ENCODE measurements at regions of chr10 and their contacts with region 1.

Region 1: DNA sequence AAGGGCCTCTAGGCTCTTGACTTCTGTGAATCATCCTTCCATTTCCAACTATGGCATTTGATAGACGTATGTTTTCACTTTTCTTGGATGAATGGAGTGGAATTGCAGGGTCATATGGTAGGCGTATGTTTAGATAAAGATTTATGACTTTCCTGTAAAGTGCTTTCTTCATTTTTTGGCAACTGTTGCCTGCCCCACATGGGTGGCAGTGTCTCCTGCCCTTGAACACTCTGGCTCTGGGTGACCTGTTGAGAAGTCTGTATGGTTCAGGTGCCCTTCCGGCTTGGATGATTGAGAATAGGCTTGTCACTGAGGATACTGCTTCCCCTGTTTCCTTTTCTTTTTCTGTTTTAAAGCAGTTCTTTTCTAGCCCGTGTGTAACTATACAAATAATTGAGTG is 23.1 kb downstream of the RET start:
- DNase-seq: no peak
- H3K4me3 ChIP-seq: no peak overlapping the region
- H3K27ac ChIP-seq: no peak overlapping the region
- H3K4me1 ChIP-seq: peaks cover 4% of the 10 kb centered on the region
- H3K27me3 ChIP-seq: no peaks in the 10 kb centered on the region
- CTCF ChIP-seq: no peak

Region 2: DNA sequence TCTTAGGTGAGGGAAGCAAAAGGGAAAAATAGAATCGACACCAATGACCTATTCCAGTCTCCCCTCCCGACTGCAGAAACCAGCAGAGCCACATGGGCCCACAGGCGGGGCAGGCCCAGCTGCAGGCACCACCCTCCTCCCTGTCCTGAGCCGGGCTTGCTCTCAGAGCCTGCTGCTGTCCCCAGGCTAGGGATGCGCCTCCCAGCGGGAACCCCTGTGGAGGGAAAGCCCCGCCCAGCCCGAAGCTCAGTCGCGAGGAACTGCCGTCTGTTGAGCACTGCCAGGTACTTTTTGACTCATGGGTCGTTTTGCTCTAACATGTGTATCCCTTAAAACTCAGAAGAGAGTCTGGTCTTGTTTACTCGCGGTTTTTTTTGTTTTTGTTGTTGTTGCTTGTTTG is 147.6 kb before region 1 on chr10:
- CTCF ChIA-PET with region 1: no interaction called
- dilution Hi-C with region 1: loop called (anchors 5 kb)
- in situ Hi-C with region 1: no loop called
- intact Hi-C with region 1: no loop called
- DNase-seq: peak; percentile 4
- H3K4me3 ChIP-seq: no peak overlapping the region
- H3K27ac ChIP-seq: no peak overlapping the region
- H3K4me1 ChIP-seq: peaks cover 5% of the 10 kb centered on the region
- H3K27me3 ChIP-seq: no peaks in the 10 kb centered on the region
- CTCF ChIP-seq: no peak

Region 3: DNA sequence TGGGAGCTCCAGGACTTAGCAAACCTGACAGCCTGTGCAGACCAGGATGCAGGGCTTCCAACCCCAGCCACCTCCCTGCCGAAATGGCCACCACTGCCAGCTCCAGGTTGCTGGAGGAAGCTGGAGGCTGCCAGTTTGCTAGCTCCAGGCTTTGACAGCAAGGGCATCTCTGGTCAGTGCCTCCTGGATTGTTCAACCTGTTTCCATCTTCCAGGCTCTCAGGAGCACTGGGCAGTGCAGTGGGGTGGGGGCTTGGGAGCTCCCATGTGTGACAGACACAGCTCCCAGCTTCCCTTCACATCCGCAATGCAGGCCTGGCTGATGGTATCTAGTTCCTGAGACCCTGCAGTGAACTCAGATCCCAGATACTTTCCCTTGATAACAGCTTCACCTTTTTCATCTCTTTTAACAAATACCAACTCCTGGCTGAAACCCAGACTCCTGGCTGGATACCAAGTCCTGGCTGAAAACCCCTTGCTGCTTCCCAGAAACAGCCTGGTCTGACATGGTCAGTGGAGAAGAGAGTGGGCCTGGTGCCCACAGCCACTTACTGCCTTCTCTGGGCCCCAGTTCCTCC is 43.8 kb before region 1 on chr10:
- CTCF ChIA-PET with region 1: no interaction called
- dilution Hi-C with region 1: loop called (anchors 5 kb)
- in situ Hi-C with region 1: no loop called
- intact Hi-C with region 1: no loop called
- DNase-seq: no peak
- H3K4me3 ChIP-seq: no peak overlapping the region
- H3K27ac ChIP-seq: no peak overlapping the region
- H3K4me1 ChIP-seq: peaks cover 4% of the 10 kb centered on the region
- H3K27me3 ChIP-seq: peaks cover 6% of the 10 kb centered on the region
- CTCF ChIP-seq: no peak

Region 4: DNA sequence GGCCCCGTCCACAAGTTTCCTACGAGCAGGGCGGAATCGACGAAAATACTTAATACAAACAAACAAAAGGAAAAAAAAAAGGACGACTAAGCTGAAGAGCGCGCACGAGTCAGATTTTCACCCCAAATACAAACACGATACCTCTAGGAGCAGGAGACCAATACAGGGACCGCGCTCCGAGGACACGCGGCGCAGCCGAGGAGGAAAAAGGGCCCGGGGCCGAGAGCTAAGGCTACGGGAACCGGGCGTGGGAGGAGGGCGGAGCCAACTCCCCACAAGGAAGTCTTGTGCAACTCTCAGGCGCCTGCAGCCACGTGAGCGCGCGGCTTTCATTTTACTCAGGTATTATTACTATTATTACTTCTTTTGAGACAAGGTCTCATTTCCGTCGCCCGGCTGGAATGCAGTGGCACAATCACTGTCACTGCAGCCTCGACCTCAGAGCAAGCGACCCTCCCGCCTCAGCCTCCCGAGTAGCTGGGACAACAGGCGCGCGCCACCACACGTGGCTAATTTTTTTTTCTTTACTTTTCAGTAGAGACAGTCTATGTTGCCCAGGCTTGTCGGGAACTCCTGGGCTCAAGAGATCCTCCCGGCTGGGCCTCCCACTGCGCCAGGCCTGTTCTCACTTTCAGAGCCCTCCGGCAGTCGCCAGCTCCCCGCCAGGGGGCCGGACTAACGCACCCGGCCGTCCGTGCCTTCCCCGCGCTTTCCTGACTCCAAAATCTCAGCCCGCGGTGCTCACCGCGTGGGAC is 307.8 kb after region 1 on chr10:
- CTCF ChIA-PET with region 1: no interaction called
- dilution Hi-C with region 1: no loop called
- in situ Hi-C with region 1: no loop called
- intact Hi-C with region 1: no loop called
- DNase-seq: peak; percentile 86
- H3K4me3 ChIP-seq: peak overlapping the region; percentile 72 to 93 (median 89)
- H3K27ac ChIP-seq: peak overlapping the region; percentile 97
- H3K4me1 ChIP-seq: peaks cover 28% of the 10 kb centered on the region
- H3K27me3 ChIP-seq: no peaks in the 10 kb centered on the region
- CTCF ChIP-seq: peak; percentile 9 to 53